ENCODE measurements at regions of chr20 and their contacts with region 1.

Region 1: GRCh38 chr20:50450881-50451752 is 59.1 kb upstream of the PTPN1 start:
- DNase-seq: no peak
- H3K4me3 ChIP-seq: no peak overlapping the region
- H3K27ac ChIP-seq: peak overlapping the region; percentile 15
- H3K4me1 ChIP-seq: peaks cover 8% of the 10 kb centered on the region
- H3K27me3 ChIP-seq: no peaks in the 10 kb centered on the region
- CTCF ChIP-seq: no peak

Region 2: DNA sequence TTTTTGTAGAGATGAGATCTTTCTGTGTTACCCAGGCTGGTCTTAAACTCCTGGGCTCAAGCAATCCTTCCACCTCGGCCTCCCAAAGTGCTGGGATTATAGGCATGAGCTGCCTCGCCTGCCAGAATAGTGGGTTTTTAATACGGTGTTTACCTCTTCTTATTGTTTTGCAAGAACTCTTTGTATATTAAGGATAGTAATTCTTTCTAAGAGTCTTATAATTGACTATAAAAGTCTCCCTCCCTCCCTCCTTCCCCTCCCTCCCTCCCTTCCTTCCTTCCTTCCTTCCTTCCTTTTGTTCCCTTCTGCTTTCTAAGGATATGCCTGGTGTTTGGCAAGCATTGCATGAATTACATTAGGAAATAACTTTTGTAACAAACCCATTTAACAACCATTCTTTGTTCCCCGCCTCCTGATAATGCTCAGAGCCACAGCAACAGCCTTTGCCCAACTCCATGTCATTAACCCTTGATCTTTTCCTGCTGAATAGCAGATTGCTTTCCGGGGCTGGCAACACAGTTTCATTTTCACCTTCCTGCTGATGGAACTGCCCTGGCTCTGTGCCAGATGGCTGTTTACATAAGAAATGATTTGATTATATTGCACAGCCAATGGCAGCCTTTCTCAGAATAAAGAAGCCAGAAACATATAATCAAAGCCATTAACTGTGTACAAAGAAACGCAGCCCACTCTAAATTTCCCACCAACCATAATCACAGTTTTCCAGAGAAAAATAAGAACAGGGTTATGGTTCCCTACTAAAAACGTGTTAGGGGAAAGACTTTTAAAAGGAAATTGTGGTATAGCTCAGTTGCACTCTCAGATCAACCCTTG is 84.6 kb before region 1 on chr20:
- intact Hi-C with region 1: loop called (anchors 10 kb)
- DNase-seq: peak; percentile 93
- H3K4me3 ChIP-seq: no peak overlapping the region
- H3K27ac ChIP-seq: peak overlapping the region; percentile 71
- H3K4me1 ChIP-seq: no peaks in the 10 kb centered on the region
- H3K27me3 ChIP-seq: no peaks in the 10 kb centered on the region
- CTCF ChIP-seq: no peak

Measured in colonic mucosa (tissue), 4 donors.